ENCODE measurements at regions of chr12 and their contacts with region 1.

Region 1: DNA sequence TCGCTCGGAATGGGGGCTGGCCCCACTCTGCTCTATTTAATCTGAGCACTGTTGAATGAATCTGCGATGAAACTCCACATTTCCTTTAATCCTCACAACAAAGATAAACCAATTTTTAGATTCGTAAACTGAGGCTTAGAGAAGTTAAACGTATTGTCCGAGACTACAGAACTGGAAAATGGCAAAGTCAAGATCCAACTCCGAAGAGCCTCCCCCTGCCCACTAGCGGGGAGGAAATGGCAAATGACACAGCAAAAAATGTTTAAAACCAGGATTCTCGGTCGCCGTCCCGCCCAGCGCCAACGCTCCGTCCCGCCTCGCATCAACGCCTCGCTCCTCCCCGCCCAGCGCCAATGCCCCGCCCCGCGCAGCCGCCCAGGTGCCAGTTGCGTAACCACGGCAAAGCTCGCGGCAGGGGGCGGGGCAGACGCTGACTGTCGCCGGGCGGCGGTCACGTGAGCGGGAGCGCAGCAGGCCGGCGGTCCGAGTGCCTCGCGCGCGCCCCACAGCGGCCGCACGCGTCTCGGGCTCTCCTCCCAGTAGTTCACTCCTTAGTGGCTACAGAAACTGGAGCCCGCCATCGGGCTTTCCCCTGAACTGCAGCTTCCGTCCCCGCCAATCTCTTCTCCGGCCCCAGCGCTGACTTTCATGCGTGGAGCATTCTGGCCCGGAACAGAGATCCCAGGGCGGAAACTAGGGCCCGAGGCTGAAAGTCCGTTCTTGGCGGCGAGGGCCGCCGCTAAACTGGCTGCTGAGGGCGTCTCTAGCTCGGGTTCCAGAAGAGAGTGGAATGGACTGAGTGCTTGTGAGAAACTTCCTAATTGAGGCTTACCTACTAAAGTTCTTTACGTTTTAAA is 13.6 kb upstream of the LRRC23 start:
- DNase-seq: peak; percentile 96 to 100 (median 99)
- ATAC-seq: peak; percentile 95
- H3K4me3 ChIP-seq: peak overlapping the region; percentile 65
- H3K4me3 Mint-ChIP-seq: peak overlapping the region; percentile 88
- H3K27ac ChIP-seq: peak overlapping the region; percentile 84 to 92
- H3K27ac Mint-ChIP-seq: peak overlapping the region; percentile 92
- H3K4me1 ChIP-seq: peaks cover 18% of the 10 kb centered on the region
- H3K4me1 Mint-ChIP-seq: peaks cover 13% of the 10 kb centered on the region
- H3K27me3 ChIP-seq: no peaks in the 10 kb centered on the region
- H3K27me3 Mint-ChIP-seq: no peaks in the 10 kb centered on the region
- CTCF ChIP-seq: peak; percentile 76

Region 2: GRCh38 chr12:6723607-6724396 is 167.2 kb before region 1 on chr12 and contains the start of gene COPS7A:
- CTCF ChIA-PET with region 1: interaction called, 4 read pairs
- POLR2A ChIA-PET with region 1: interaction called, 11 read pairs
- intact Hi-C with region 1: no loop called
- DNase-seq: peak; percentile 81 to 99 (median 93)
- ATAC-seq: peak; percentile 84
- H3K4me3 ChIP-seq: peak within 1 kb of the TSS; percentile 59
- H3K4me3 Mint-ChIP-seq: peak within 1 kb of the TSS; percentile 87
- H3K27ac ChIP-seq: peak within 1 kb of the TSS; percentile 68 to 88
- H3K27ac Mint-ChIP-seq: peak within 1 kb of the TSS; percentile 83
- H3K4me1 ChIP-seq: peaks cover 18% of the 10 kb centered on the region
- H3K4me1 Mint-ChIP-seq: peaks cover 28% of the 10 kb centered on the region
- H3K27me3 ChIP-seq: no peaks in the 10 kb centered on the region
- H3K27me3 Mint-ChIP-seq: no peaks in the 10 kb centered on the region
- CTCF ChIP-seq: no peak
- total RNA-seq, gene COPS7A: 9.4 to 9.6 TPM

Region 3: GRCh38 chr12:6904280-6905278 is 13.6 kb after region 1 on chr12 and contains the start of gene LRRC23:
- CTCF ChIA-PET with region 1: interaction called, 30 read pairs
- POLR2A ChIA-PET with region 1: interaction called, 14 read pairs
- intact Hi-C with region 1: loop called (anchors 1 to 2 kb)
- DNase-seq: peak; percentile 92 to 99 (median 96)
- ATAC-seq: peak; percentile 96
- H3K4me3 ChIP-seq: peak within 1 kb of the TSS; percentile 60
- H3K4me3 Mint-ChIP-seq: peak within 1 kb of the TSS; percentile 22
- H3K27ac ChIP-seq: peak within 1 kb of the TSS; percentile 81 to 94
- H3K27ac Mint-ChIP-seq: no peak within 1 kb of the TSS
- H3K4me1 ChIP-seq: peaks cover 21% of the 10 kb centered on the region
- H3K4me1 Mint-ChIP-seq: no peaks in the 10 kb centered on the region
- H3K27me3 ChIP-seq: no peaks in the 10 kb centered on the region
- H3K27me3 Mint-ChIP-seq: no peaks in the 10 kb centered on the region
- CTCF ChIP-seq: no peak
- total RNA-seq, gene LRRC23: 3.2 to 4.7 TPM

Region 4: GRCh38 chr12:6927379-6928024 is 36.5 kb after region 1 on chr12 and contains the start of gene ATN1:
- CTCF ChIA-PET with region 1: interaction called, 10 read pairs
- POLR2A ChIA-PET with region 1: interaction called, 5 read pairs
- intact Hi-C with region 1: no loop called
- DNase-seq: peak in 7 of 14 experiments; percentile 33 to 69 (median 54)
- ATAC-seq: peak; percentile 41
- H3K4me3 ChIP-seq: peak within 1 kb of the TSS; percentile 65
- H3K4me3 Mint-ChIP-seq: peak within 1 kb of the TSS; percentile 95
- H3K27ac ChIP-seq: peak within 1 kb of the TSS; percentile 79 to 82
- H3K27ac Mint-ChIP-seq: peak within 1 kb of the TSS; percentile 87
- H3K4me1 ChIP-seq: peaks cover 49% of the 10 kb centered on the region
- H3K4me1 Mint-ChIP-seq: peaks cover 56% of the 10 kb centered on the region
- H3K27me3 ChIP-seq: no peaks in the 10 kb centered on the region
- H3K27me3 Mint-ChIP-seq: no peaks in the 10 kb centered on the region
- CTCF ChIP-seq: no peak
- total RNA-seq, gene ATN1: 28.7 to 29.6 TPM

Region 5: DNA sequence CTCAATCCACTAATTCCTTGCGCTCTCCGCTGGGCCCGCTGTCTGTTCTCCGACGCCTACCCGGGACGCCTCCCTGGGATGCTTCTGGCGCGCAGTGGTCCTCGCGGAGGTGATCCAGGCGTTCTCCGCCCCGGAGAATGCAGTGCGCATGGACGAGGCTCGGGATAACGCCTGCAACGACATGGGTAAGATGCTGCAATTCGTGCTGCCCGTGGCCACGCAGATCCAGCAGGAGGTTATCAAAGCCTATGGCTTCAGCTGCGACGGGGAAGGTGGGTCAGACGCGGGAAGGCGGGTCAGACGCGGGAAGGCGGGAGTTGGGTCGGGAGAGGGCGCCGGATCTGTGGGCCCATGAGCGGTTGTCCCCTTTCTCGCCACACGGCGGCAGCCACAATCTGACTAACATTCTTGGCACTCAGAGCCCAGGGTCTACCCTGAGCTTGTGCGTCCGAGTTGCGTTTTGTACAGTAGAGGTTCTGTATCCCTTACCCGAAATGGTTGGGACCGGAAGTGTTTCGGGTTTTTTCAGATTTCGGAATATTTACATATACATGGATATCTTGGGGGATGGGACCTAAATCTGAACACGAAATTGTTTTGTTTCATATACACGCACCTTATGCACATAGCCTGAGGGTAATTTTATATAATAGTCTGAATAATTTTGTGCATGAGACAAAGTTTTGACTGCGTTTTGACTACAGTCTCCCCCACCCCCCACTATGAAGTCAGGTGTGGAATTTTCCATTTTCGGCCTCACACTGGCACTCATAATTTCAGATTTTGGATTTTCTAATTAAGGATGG is 53.6 kb after region 1 on chr12:
- CTCF ChIA-PET with region 1: interaction called, 21 read pairs
- POLR2A ChIA-PET with region 1: interaction called, 16 read pairs
- intact Hi-C with region 1: no loop called
- DNase-seq: peak; percentile 75 to 94 (median 84)
- ATAC-seq: peak; percentile 51
- H3K4me3 ChIP-seq: peak overlapping the region; percentile 65
- H3K4me3 Mint-ChIP-seq: peak overlapping the region; percentile 97
- H3K27ac ChIP-seq: peak overlapping the region; percentile 96 to 98
- H3K27ac Mint-ChIP-seq: peak overlapping the region; percentile 97
- H3K4me1 ChIP-seq: peaks cover 74% of the 10 kb centered on the region
- H3K4me1 Mint-ChIP-seq: peaks cover 73% of the 10 kb centered on the region
- H3K27me3 ChIP-seq: no peaks in the 10 kb centered on the region
- H3K27me3 Mint-ChIP-seq: no peaks in the 10 kb centered on the region
- CTCF ChIP-seq: peak; percentile 92

Region 6: DNA sequence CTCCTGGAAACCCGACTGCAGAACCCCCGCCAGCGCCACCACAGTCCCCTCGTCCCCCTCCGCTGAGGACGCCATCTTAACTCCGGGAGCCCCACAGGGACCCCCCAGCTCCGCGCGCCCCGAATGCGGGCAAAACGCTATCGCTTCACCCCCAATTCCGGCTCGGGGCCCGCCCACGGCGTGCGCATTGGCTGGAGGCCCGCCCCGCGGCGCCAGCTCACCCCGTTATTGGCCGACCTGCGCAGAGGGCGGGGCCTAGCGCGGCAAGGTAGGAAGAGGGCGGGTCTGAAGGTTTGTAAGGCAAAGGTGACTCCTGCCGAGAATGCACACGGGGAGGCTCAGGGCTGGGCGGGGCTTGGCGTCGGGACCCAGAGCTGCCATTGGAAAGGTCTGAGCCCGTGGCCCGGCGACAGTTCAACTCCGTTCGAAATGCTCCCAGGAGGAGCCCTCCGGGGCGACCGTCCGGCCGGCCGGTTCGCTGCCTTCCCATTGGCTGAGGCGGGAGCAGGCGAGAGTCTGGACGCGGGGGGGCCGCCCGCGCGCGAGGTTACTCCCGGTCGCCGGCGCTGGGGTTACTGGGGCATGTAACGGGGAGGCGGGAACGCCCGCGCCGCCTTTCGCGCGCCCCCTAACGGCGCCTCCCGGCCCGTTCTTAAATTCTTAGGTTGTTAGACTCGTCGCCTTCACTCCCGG is 127.5 kb after region 1 on chr12 and contains the start of gene LPCAT3:
- CTCF ChIA-PET with region 1: interaction called, 11 read pairs
- POLR2A ChIA-PET with region 1: no interaction called
- intact Hi-C with region 1: no loop called
- DNase-seq: peak; percentile 94 to 99 (median 96)
- ATAC-seq: peak; percentile 96
- H3K4me3 ChIP-seq: peak within 1 kb of the TSS; percentile 98
- H3K4me3 Mint-ChIP-seq: peak within 1 kb of the TSS; percentile 87
- H3K27ac ChIP-seq: peak within 1 kb of the TSS; percentile 87 to 89
- H3K27ac Mint-ChIP-seq: peak within 1 kb of the TSS; percentile 62
- H3K4me1 ChIP-seq: peaks cover 24% of the 10 kb centered on the region
- H3K4me1 Mint-ChIP-seq: peaks cover 30% of the 10 kb centered on the region
- H3K27me3 ChIP-seq: no peaks in the 10 kb centered on the region
- H3K27me3 Mint-ChIP-seq: no peaks in the 10 kb centered on the region
- CTCF ChIP-seq: peak; percentile 87
- total RNA-seq, gene LPCAT3: 11.8 to 14.8 TPM